ENCODE measurements at regions of chr13 and their contacts with region 1.

Region 1: DNA sequence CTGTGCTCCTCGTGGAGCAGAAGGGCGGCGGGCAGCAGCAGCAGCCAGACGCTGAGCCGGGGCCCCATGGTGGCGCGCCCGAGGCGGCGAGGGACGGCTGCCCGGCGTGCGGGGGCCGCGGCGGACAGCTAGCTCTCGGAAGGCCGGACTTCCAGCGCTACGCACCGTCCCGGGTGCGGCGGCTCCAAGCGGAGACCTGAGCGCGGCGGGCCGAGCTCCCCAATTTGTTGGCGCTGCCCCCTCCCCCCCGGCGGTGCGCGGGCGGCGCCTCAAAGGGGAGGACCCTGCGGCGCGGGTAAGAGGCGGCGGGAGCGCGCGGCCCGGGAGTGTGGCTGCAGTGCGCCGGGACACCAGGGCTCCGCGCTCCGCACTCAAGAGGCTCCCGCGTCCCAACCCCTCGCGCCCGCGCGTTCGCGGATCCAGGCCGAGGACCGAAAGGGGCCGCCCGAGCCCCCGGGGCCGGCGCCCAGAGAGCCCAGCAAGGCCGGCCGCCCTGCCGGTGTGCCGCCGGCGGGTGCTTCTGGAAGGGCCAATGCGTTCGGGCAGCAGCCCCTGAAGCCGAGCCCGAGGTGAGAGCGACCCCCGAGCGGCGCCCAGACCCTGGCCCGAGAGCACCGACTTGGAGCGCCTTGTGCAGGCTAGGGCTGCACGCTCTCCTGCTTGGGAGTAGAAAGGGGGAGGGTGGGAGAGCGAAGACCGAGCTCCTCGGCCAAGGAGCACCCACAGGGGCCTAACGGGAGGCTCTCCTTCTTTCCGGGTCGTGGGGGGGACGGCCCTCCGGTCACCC is at the starts of genes COL4A1 and COL4A2:
- DNase-seq: peak; percentile 66
- H3K4me3 ChIP-seq: peak within 1 kb of the TSS; percentile 64 to 83 (median 71)
- H3K27ac ChIP-seq: peak within 1 kb of the TSS; percentile 59
- H3K4me1 ChIP-seq: peaks cover 69% of the 10 kb centered on the region
- H3K27me3 ChIP-seq: no peaks in the 10 kb centered on the region
- CTCF ChIP-seq: no peak
- POLR2A ChIP-seq: peak; percentile 92
- total RNA-seq, gene COL4A1: 1,119 and 1,341 TPM in 2 replicates
- total RNA-seq, gene COL4A2: 792 and 935 TPM in 2 replicates

Region 2: GRCh38 chr13:110218581-110219201 is 88.5 kb before region 1 on chr13:
- CTCF ChIA-PET with region 1: interaction called, 28 read pairs
- POLR2A ChIA-PET with region 1: no interaction called
- dilution Hi-C with region 1: no loop called
- intact Hi-C with region 1: loop called (anchors 1 kb)
- DNase-seq: no peak
- H3K4me3 ChIP-seq: no peak overlapping the region
- H3K27ac ChIP-seq: no peak overlapping the region
- H3K4me1 ChIP-seq: peaks cover 18% of the 10 kb centered on the region
- H3K27me3 ChIP-seq: no peaks in the 10 kb centered on the region
- CTCF ChIP-seq: no peak
- POLR2A ChIP-seq: no peak

Region 3: DNA sequence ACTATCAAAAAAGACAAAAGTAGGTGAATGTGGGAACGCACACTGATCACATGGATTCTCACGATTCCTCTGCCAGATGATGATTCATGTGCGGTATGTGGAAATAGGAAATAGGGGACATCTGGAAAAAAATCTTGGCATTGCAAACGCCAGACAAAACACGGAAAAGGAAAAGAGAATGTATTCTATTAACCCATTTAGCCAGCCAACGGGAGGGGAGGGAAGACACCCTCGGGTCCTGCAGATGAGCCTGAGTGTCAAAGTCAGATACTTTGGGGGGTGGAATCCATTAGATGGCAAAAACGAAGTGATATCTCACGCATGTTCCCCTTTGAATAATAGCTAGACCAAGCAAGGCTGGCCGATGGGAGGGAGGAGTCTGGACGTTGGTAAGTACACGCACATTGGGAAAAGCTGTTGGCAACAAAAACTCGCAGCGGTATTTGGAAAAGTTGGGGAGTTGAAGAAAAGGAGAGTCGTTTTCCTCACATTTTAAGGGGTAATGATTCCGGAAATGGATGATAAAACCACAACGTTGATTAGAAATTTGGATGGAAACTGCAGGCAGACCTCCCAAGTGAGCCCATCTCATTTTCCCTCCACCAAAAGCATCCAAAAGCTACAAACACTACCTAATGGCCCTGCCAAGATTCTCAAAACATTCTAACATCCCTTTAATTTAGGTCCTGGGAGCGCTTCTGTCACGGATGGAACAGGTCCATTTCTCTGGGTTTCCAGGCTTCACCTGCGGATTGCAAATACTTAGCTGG is 73.8 kb before region 1 on chr13:
- CTCF ChIA-PET with region 1: interaction called, 4 read pairs
- POLR2A ChIA-PET with region 1: no interaction called
- dilution Hi-C with region 1: no loop called
- intact Hi-C with region 1: loop called (anchors 2 kb)
- DNase-seq: peak; percentile 93
- H3K4me3 ChIP-seq: peak overlapping the region in 1 of 3 experiments; percentile 31
- H3K27ac ChIP-seq: peak overlapping the region; percentile 90
- H3K4me1 ChIP-seq: peaks cover 29% of the 10 kb centered on the region
- H3K27me3 ChIP-seq: no peaks in the 10 kb centered on the region
- CTCF ChIP-seq: no peak
- POLR2A ChIP-seq: peak; percentile 57

Region 4: GRCh38 chr13:110263888-110264287 is 43.3 kb before region 1 on chr13:
- CTCF ChIA-PET with region 1: interaction called, 7 read pairs
- POLR2A ChIA-PET with region 1: interaction called, 4 read pairs
- dilution Hi-C with region 1: no loop called
- intact Hi-C with region 1: loop called (anchors 2 kb)
- DNase-seq: no peak
- H3K4me3 ChIP-seq: no peak overlapping the region
- H3K27ac ChIP-seq: peak overlapping the region; percentile 25
- H3K4me1 ChIP-seq: peaks cover 85% of the 10 kb centered on the region
- H3K27me3 ChIP-seq: no peaks in the 10 kb centered on the region
- CTCF ChIP-seq: no peak
- POLR2A ChIP-seq: no peak

Region 5: GRCh38 chr13:110347535-110348308 is 40.6 kb after region 1 on chr13:
- CTCF ChIA-PET with region 1: interaction called, 8 read pairs
- POLR2A ChIA-PET with region 1: no interaction called
- dilution Hi-C with region 1: no loop called
- intact Hi-C with region 1: loop called (anchors 1 kb)
- DNase-seq: no peak
- H3K4me3 ChIP-seq: no peak overlapping the region
- H3K27ac ChIP-seq: peak overlapping the region; percentile 61
- H3K4me1 ChIP-seq: peaks cover 33% of the 10 kb centered on the region
- H3K27me3 ChIP-seq: peaks cover 0 to 2% of the 10 kb centered on the region in 2 experiments
- CTCF ChIP-seq: no peak
- POLR2A ChIP-seq: no peak

Measured in endothelial cell of umbilical vein (primary cell).